Left cardiac atrium (tissue), 4 donors: ENCODE measurements at regions of chr3 and their contacts with region 1.

Region 1: GRCh38 chr3:52685709-52686691 is at the starts of genes GNL3 and PBRM1:
- DNase-seq: peak; percentile 95
- ATAC-seq: peak; percentile 91 to 93
- total RNA-seq, gene GNL3: 30.2 to 61.2 TPM
- total RNA-seq, gene PBRM1: 50.7 to 54.4 TPM

Region 2: DNA sequence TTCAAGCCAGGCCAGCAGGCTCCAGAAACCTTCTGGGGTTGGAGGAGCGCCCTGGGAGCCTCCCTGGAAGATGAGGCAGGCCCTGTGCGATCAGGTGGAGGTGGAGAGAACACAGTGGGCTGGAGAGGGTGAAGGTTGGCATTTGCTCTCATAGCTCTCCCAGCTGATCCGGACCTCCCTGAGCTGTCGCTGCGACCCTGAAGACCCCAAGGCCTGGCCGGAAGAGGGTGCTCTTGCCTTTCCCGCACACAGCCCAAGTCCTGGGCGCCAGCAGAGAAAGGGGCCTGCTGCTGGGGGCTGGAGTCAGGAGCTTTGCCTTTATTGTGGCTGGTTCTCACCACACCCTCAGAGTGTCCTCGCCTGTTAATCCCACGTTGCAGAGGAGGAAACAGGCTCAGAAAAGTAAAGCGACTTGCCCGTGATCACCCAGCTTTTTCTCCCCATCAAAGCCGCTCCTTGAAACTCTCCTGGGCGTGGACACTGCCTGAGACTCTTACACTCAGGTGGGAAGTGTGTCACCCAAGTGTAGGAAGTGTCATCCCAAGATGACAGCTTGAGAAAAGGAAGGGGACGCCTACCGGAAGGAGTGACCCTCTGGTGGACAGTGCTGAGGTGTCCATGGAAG is 681.7 kb before region 1 on chr3:
- intact Hi-C with region 1: no loop called
- DNase-seq: peak; percentile 69
- ATAC-seq: peak; percentile 67 to 76

Region 3: DNA sequence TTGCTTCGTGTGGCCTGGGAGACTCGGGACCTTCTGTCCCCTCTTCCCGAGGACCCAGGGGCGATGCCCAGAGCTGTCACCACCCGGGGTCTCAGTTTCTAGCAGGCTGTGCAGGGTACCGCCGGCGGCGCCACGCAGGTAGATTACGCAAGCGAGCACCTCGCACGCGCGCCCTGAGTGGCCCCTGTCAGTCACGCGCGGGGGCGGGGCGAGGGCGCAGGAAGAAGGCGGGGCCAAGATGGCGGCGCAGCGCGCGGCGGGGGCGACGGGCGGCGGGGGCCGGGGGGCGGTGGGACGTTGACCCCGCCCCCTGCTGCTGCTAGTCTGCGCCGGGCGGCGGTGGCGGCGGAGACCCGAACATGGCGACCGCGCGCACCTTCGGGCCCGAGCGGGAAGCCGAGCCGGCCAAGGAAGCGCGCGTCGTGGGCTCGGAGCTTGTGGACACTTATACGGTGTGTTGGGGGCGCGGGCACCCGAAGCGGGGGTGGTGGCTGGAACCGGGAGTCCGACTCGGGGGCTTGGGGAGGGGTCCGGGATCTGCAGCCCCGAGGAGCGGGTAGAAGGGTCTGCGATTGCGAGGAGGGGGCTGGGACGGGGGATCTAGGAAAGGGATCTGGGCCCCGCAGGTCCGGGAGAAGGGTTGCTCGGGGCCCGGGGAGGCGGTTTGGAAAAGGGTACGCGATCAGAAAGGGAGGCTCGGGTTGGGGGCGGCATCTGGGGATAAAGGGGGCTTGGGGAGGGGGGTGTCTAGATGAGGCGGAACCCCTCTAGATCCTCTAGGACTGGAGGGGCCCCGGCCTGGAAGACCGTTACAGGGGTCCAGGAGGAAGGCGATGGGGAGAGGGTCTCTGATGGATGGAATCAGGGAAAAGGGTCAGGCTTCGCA is 230.5 kb before region 1 on chr3 and contains the start of gene NISCH:
- intact Hi-C with region 1: loop called in 1 of 2 experiments (anchors 10 kb)
- DNase-seq: peak; percentile 92
- ATAC-seq: peak; percentile 75 to 81
- total RNA-seq, gene NISCH: 45.9 to 49.0 TPM

Region 4: DNA sequence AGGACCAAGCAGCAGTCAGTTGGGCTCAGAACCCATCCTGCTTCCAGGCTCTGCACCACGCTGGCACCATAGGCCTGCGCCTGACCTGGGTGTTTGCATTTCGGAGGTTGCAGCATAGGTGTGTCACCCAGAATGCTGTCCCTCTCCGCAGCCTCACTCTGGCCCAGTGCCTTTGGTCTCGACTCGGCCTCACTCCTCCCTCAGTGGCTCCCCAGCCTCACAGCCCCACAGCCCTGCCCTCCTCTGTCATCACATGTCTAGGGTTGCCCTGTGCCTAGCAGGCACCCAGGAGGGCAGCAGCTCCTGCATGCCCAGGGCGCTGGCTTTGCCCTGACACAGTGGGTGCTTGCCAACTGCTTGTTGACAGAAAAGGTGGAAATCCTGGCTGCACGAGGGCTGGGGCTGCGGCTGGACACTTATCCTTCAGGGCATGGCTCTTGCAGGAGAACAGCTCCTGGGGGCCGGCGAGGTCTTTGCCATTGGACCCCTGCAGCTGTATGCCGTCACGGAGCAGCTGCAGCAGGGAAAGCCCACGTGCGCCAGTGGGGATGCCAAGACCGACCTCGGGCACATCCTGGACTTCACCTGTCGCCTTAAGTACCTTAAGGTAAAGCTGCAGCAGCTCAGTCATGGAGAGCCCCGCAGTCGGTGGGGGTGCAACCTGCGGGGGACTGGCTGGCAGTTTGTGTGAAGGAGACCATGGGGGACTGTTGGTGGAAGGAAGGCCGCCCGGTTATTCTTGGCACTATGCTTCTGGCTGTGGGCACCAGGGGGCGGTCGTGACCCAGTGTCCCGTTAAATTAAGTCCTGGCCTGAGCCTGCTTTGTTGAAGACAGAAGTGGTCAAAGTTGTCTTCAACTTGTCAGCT is 214.4 kb before region 1 on chr3:
- intact Hi-C with region 1: loop called in 1 of 2 experiments (anchors 10 kb)
- DNase-seq: peak; percentile 82
- ATAC-seq: peak; percentile 65 to 80

Region 5: DNA sequence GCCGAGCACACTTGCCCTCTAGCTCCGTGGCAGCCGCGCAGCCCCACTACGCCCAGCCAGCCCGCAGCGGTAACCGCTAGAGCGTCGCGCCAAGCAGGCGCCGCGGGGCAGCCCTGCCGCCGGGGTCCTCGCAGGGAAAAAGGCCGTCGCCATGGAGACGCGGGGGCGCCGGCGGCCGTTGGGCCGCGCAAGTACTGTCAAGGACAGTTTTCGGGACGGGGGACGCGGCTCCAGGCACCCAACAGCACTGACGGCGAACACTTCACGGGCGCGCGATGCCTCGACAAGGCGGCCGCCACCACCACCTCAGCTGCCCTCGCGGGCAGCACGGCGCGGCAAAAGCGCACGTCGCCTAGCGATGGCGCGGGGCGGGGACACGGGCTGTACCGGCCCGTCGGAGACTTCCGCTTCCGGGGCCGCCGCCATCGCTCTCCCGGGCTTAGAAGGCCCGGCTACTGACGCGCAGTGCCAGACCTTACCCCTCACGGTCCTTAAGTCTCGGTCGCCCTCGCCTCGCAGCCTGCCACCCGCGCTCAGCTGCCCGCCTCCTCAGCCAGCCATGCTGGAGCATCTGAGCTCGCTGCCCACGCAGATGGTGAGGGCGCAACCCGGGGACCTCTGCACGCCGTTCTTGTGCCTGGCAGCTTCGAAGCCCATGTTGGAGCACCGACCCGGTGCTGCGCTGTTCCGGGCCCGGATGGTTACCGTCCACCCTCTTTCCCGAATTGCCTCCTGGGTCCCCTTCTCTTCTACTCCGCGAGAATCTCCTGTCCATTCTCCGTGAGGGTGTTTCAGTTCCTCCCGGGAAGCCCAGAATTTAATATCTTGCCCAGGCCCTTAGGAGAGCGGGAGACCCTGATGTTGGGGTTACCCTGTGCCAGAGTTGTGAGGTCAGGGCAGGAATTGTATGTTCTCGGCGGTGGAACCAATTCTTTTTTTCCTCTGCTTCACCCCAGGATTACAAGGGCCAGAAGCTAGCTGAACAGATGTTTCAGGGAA is 20.0 kb after region 1 on chr3 and contains the starts of genes GLT8D1 and SPCS1:
- intact Hi-C with region 1: loop called in 1 of 2 experiments (anchors 2 kb)
- DNase-seq: peak; percentile 92
- ATAC-seq: peak; percentile 95 to 97
- total RNA-seq, gene GLT8D1: 31.3 to 37.6 TPM
- total RNA-seq, gene SPCS1: 72.1 to 88.1 TPM